ENCODE measurements at regions of chr5 and their contacts with region 1.

Region 1: GRCh38 chr5:7876867-7877266 is 7.9 kb downstream of the MTRR start:
- DNase-seq: no peak
- H3K4me3 ChIP-seq: no peak overlapping the region
- H3K4me3 Mint-ChIP-seq: peak overlapping the region in 2 of 8 donors; percentile 1 to 66
- H3K27ac ChIP-seq: peak overlapping the region; percentile 5
- H3K27ac Mint-ChIP-seq: peak overlapping the region in 6 of 7 donors; percentile 7 to 59 (median 47)
- H3K4me1 ChIP-seq: peaks cover 60% of the 10 kb centered on the region
- H3K4me1 Mint-ChIP-seq: peaks cover 54 to 79% (median 68%) of the 10 kb centered on the region in 4 donors
- H3K27me3 ChIP-seq: no peaks in the 10 kb centered on the region
- H3K27me3 Mint-ChIP-seq: no peaks in the 10 kb centered on the region

Region 2: GRCh38 chr5:7157083-7157482 is 719.8 kb before region 1 on chr5:
- CTCF ChIA-PET with region 1: no interaction called
- POLR2A ChIA-PET with region 1: no interaction called
- intact Hi-C with region 1: no loop called
- DNase-seq: no peak
- H3K4me3 ChIP-seq: no peak overlapping the region
- H3K4me3 Mint-ChIP-seq: no peak overlapping the region
- H3K27ac ChIP-seq: no peak overlapping the region
- H3K27ac Mint-ChIP-seq: no peak overlapping the region
- H3K4me1 ChIP-seq: no peaks in the 10 kb centered on the region
- H3K4me1 Mint-ChIP-seq: no peaks in the 10 kb centered on the region
- H3K27me3 ChIP-seq: no peaks in the 10 kb centered on the region
- H3K27me3 Mint-ChIP-seq: no peaks in the 10 kb centered on the region

Region 3: GRCh38 chr5:7837403-7837802 is 39.5 kb before region 1 on chr5:
- CTCF ChIA-PET with region 1: no interaction called
- POLR2A ChIA-PET with region 1: no interaction called
- intact Hi-C with region 1: no loop called
- DNase-seq: no peak
- H3K4me3 ChIP-seq: no peak overlapping the region
- H3K4me3 Mint-ChIP-seq: no peak overlapping the region
- H3K27ac ChIP-seq: no peak overlapping the region
- H3K27ac Mint-ChIP-seq: no peak overlapping the region
- H3K4me1 ChIP-seq: no peaks in the 10 kb centered on the region
- H3K4me1 Mint-ChIP-seq: no peaks in the 10 kb centered on the region
- H3K27me3 ChIP-seq: no peaks in the 10 kb centered on the region
- H3K27me3 Mint-ChIP-seq: peaks cover 9% of the 10 kb centered on the region in 2 donors

Region 4: GRCh38 chr5:7850395-7851239 is 26.2 kb before region 1 on chr5 and contains the start of gene CFAP90:
- CTCF ChIA-PET with region 1: interaction called, 45 read pairs
- POLR2A ChIA-PET with region 1: no interaction called
- intact Hi-C with region 1: no loop called
- DNase-seq: peak in 3 of 5 donors; percentile 27 to 55 (median 32)
- H3K4me3 ChIP-seq: peak within 1 kb of the TSS in 1 of 2 donors; percentile 41
- H3K4me3 Mint-ChIP-seq: peak within 1 kb of the TSS; percentile 80 to 90 (median 86)
- H3K27ac ChIP-seq: no peak within 1 kb of the TSS
- H3K27ac Mint-ChIP-seq: peak within 1 kb of the TSS; percentile 5 to 89 (median 70)
- H3K4me1 ChIP-seq: peaks cover 26% of the 10 kb centered on the region
- H3K4me1 Mint-ChIP-seq: peaks cover 14 to 32% (median 22%) of the 10 kb centered on the region in 4 donors
- H3K27me3 ChIP-seq: peaks cover 15% of the 10 kb centered on the region
- H3K27me3 Mint-ChIP-seq: peaks cover 16 to 17% of the 10 kb centered on the region in 2 donors
- total RNA-seq, gene CFAP90: not detected

Region 5: GRCh38 chr5:7886849-7887475 is 10.1 kb after region 1 on chr5:
- CTCF ChIA-PET with region 1: interaction called, 58 read pairs
- POLR2A ChIA-PET with region 1: interaction called, 10 read pairs
- intact Hi-C with region 1: loop called (anchors 1 kb)
- DNase-seq: peak in 4 of 5 donors; percentile 26 to 44 (median 37)
- H3K4me3 ChIP-seq: no peak overlapping the region
- H3K4me3 Mint-ChIP-seq: no peak overlapping the region
- H3K27ac ChIP-seq: no peak overlapping the region
- H3K27ac Mint-ChIP-seq: peak overlapping the region in 4 of 7 donors; percentile 10 to 50 (median 23)
- H3K4me1 ChIP-seq: no peaks in the 10 kb centered on the region
- H3K4me1 Mint-ChIP-seq: peaks cover 4 to 13% (median 8%) of the 10 kb centered on the region in 4 donors
- H3K27me3 ChIP-seq: no peaks in the 10 kb centered on the region
- H3K27me3 Mint-ChIP-seq: no peaks in the 10 kb centered on the region

Measured in CD4-positive, alpha-beta memory T cell (primary cell).